OCI-LY7 (cell line): ENCODE measurements at regions of chr17 and their contacts with region 1.

Region 1: GRCh38 chr17:36127199-36127893 is 23.7 kb downstream of the CCL4 start:
- DNase-seq: peak; percentile 92
- H3K4me3 ChIP-seq: no peak overlapping the region
- H3K27ac ChIP-seq: no peak overlapping the region
- H3K4me1 ChIP-seq: peaks cover 20% of the 10 kb centered on the region
- CTCF ChIP-seq: no peak

Region 2: GRCh38 chr17:35713069-35713728 is 414.1 kb before region 1 on chr17:
- CTCF ChIA-PET with region 1: no interaction called
- POLR2A ChIA-PET with region 1: no interaction called
- intact Hi-C with region 1: no loop called
- DNase-seq: no peak
- H3K4me3 ChIP-seq: no peak overlapping the region
- H3K27ac ChIP-seq: no peak overlapping the region
- H3K4me1 ChIP-seq: peaks cover 25% of the 10 kb centered on the region
- CTCF ChIP-seq: no peak

Region 3: GRCh38 chr17:36089888-36090836 is 37.2 kb before region 1 on chr17 and contains the start of gene CCL3:
- CTCF ChIA-PET with region 1: no interaction called
- POLR2A ChIA-PET with region 1: interaction called, 4 read pairs
- intact Hi-C with region 1: loop called (anchors 1 kb)
- DNase-seq: peak; percentile 51
- H3K4me3 ChIP-seq: no peak within 1 kb of the TSS
- H3K27ac ChIP-seq: no peak within 1 kb of the TSS
- H3K4me1 ChIP-seq: peaks cover 16% of the 10 kb centered on the region
- CTCF ChIP-seq: no peak
- total RNA-seq, gene CCL3: not detected in 2 replicates

Region 4: DNA sequence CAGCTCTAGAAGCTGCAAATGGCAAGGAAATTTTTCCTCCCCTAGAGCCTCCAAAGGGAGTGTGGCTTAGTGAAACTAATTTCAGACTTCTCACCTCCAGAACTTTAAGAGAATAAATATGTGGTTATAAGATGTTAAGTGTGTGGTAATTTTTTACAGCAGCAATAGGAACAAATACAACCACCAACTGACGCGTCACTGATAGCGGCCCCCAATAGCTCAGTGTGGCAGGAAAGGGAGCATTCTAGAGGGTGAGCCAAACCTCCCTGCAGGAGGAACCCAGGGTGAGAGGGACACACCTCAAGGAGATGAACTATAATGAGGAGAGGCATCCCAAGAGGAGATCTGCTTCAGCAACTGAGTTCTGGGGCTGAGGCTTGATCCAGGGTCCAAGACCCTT is 19.7 kb before region 1 on chr17:
- CTCF ChIA-PET with region 1: no interaction called
- POLR2A ChIA-PET with region 1: no interaction called
- intact Hi-C with region 1: no loop called
- DNase-seq: no peak
- H3K4me3 ChIP-seq: no peak overlapping the region
- H3K27ac ChIP-seq: no peak overlapping the region
- H3K4me1 ChIP-seq: peaks cover 12% of the 10 kb centered on the region
- CTCF ChIP-seq: no peak